CD8-positive, alpha-beta memory T cell (primary cell): ENCODE measurements at regions of chr14 and their contacts with region 1.

Region 1: GRCh38 chr14:99260587-99261551 is 11.1 kb downstream of the BCL11B start:
- DNase-seq: peak; percentile 56 to 85 (median 78)
- H3K4me3 ChIP-seq: peak overlapping the region; percentile 65
- H3K4me3 Mint-ChIP-seq: peak overlapping the region; percentile 77 to 100 (median 99)
- H3K27ac ChIP-seq: peak overlapping the region; percentile 89
- H3K27ac Mint-ChIP-seq: peak overlapping the region; percentile 92 to 100 (median 100)
- H3K4me1 ChIP-seq: peaks cover 93% of the 10 kb centered on the region
- H3K4me1 Mint-ChIP-seq: peaks cover 96 to 100% (median 100%) of the 10 kb centered on the region in 3 donors
- H3K27me3 ChIP-seq: no peaks in the 10 kb centered on the region
- H3K27me3 Mint-ChIP-seq: peaks cover 0 to 6% of the 10 kb centered on the region in 2 donors

Region 2: GRCh38 chr14:99224116-99224910 is 36.6 kb before region 1 on chr14:
- CTCF ChIA-PET with region 1: interaction called, 532 read pairs
- POLR2A ChIA-PET with region 1: interaction called, 25 read pairs
- DNase-seq: no peak
- H3K4me3 ChIP-seq: peak overlapping the region; percentile 14
- H3K4me3 Mint-ChIP-seq: peak overlapping the region in 6 of 7 donors; percentile 43 to 82 (median 68)
- H3K27ac ChIP-seq: no peak overlapping the region
- H3K27ac Mint-ChIP-seq: peak overlapping the region; percentile 92 to 100 (median 99)
- H3K4me1 ChIP-seq: peaks cover 96% of the 10 kb centered on the region
- H3K4me1 Mint-ChIP-seq: peaks cover 93 to 97% (median 97%) of the 10 kb centered on the region in 3 donors
- H3K27me3 ChIP-seq: no peaks in the 10 kb centered on the region
- H3K27me3 Mint-ChIP-seq: peaks cover 0 to 4% of the 10 kb centered on the region in 2 donors

Region 3: GRCh38 chr14:99245564-99246511 is 15.0 kb before region 1 on chr14:
- CTCF ChIA-PET with region 1: interaction called, 532 read pairs
- POLR2A ChIA-PET with region 1: interaction called, 63 read pairs
- DNase-seq: no peak
- H3K4me3 ChIP-seq: peak overlapping the region; percentile 70
- H3K4me3 Mint-ChIP-seq: peak overlapping the region; percentile 84 to 94 (median 87)
- H3K27ac ChIP-seq: peak overlapping the region; percentile 57
- H3K27ac Mint-ChIP-seq: peak overlapping the region; percentile 90 to 100 (median 99)
- H3K4me1 ChIP-seq: peaks cover 89% of the 10 kb centered on the region
- H3K4me1 Mint-ChIP-seq: peaks cover 85 to 87% (median 86%) of the 10 kb centered on the region in 3 donors
- H3K27me3 ChIP-seq: no peaks in the 10 kb centered on the region
- H3K27me3 Mint-ChIP-seq: peaks cover 0 to 2% of the 10 kb centered on the region in 2 donors